Dorsolateral prefrontal cortex (tissue), 120 donors: ENCODE measurements at regions of chr4 and their contacts with region 1.

Region 1: GRCh38 chr4:53313510-53313909 is 52.4 kb downstream of the SCFD2 start:
- DNase-seq: peak in 3 of 10 donors; percentile 7 to 44 (median 43)
- H3K4me3 ChIP-seq: no peak overlapping the region
- H3K27ac ChIP-seq: no peak overlapping the region
- H3K27me3 ChIP-seq: no peaks in the 10 kb centered on the region
- CTCF ChIP-seq: peak in 47 of 56 donors; percentile 9 to 71 (median 38)

Region 2: GRCh38 chr4:53365486-53366300 is 52.2 kb after region 1 on chr4 and contains the start of gene SCFD2:
- intact Hi-C with region 1: no loop called
- DNase-seq: peak; percentile 96 to 99 (median 99)
- H3K4me3 ChIP-seq: peak within 1 kb of the TSS; percentile 70 to 99 (median 94)
- H3K27ac ChIP-seq: peak within 1 kb of the TSS in 52 of 59 donors; percentile 14 to 83 (median 68)
- H3K27me3 ChIP-seq: peaks cover 0 to 22% (median 0%) of the 10 kb centered on the region in 45 donors
- CTCF ChIP-seq: peak in 10 of 56 donors; percentile 6 to 33 (median 20)
- total RNA-seq, gene SCFD2: 13.8 to 29.8 (median 23.4) TPM

Region 3: GRCh38 chr4:53804719-53805118 is 491.2 kb after region 1 on chr4:
- intact Hi-C with region 1: loop called in 1 of 2 experiments (anchors 10 kb)
- DNase-seq: peak in 4 of 10 donors; percentile 23 to 59 (median 36)
- H3K4me3 ChIP-seq: no peak overlapping the region
- H3K27ac ChIP-seq: no peak overlapping the region
- H3K27me3 ChIP-seq: peaks cover 0 to 3% (median 0%) of the 10 kb centered on the region in 45 donors
- CTCF ChIP-seq: peak in 48 of 56 donors; percentile 10 to 64 (median 36)

Region 4: GRCh38 chr4:53830511-53830910 is 517.0 kb after region 1 on chr4:
- intact Hi-C with region 1: no loop called
- DNase-seq: no peak
- H3K4me3 ChIP-seq: no peak overlapping the region
- H3K27ac ChIP-seq: no peak overlapping the region
- H3K27me3 ChIP-seq: peaks cover 0 to under 1% (median 0%) of the 10 kb centered on the region in 45 donors
- CTCF ChIP-seq: no peak

Region 5: DNA sequence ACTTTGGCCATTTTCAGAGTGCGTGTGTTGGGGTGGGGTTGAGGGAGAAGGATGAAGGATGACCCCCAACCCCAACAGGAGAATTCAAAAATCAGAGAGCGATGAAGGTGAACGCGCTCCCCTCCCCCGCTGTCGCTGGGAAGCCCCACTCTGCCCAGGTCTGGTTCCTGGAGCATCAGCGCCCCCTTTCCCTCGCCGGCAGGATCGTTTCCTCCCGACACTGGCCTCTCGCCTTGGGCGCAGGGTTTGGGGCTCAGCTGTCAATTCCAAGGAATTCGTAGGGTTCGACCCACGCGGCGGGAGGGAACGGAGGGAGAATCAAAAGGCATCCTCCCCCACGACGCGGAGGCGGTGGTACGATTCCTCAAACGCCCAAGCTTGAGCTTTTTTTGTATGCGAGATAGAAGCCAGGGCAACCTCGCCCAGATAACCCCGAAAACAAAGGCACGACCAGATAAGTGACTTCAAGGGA is 914.6 kb after region 1 on chr4:
- intact Hi-C with region 1: loop called in 1 of 2 experiments (anchors 5 kb)
- DNase-seq: peak in 5 of 10 donors; percentile 15 to 65 (median 58)
- H3K4me3 ChIP-seq: peak overlapping the region; percentile 14 to 67 (median 46)
- H3K27ac ChIP-seq: peak overlapping the region in 2 of 59 donors; percentile 10 to 59
- H3K27me3 ChIP-seq: peaks cover 6 to 100% (median 91%) of the 10 kb centered on the region in 45 donors
- CTCF ChIP-seq: peak in 55 of 56 donors; percentile 24 to 73 (median 60)